Breast epithelium (tissue), 4 donors: ENCODE measurements at regions of chr9 and their contacts with region 1.

Region 1: DNA sequence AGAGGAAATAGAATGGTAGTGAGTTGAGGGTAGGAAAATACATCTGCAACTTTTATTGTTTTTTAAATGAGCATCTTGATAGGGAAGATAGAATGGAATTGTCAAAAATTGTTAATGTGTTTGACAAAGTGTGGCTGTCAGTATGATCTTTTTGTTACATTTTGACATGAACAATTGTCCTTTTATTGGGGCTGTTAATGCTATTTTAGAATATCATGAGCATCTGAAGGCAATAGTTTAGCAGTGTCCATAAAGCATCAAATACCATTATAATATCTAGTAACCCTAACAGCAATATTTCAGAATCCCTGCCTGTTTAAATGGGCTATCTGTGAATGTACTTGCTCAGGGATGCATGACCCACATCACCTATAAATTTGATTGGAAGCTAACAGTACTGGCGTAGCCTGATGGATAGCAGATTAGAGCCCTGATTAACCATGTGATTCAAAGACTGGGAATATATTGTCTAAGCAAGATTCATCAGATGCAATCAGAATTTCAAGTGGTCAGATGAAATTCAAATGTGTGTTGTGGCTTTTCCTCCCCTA is 37.8 kb downstream of the TLE4 start:
- DNase-seq: no peak
- H3K4me3 ChIP-seq: no peak overlapping the region
- H3K27ac ChIP-seq: no peak overlapping the region
- H3K4me1 ChIP-seq: no peaks in the 10 kb centered on the region
- H3K27me3 ChIP-seq: no peaks in the 10 kb centered on the region
- CTCF ChIP-seq: no peak
- POLR2A ChIP-seq: no peak

Region 2: GRCh38 chr9:79623799-79624721 is 14.5 kb after region 1 on chr9:
- intact Hi-C with region 1: loop called (anchors 2 kb)
- DNase-seq: no peak
- H3K4me3 ChIP-seq: no peak overlapping the region
- H3K27ac ChIP-seq: no peak overlapping the region
- H3K4me1 ChIP-seq: no peaks in the 10 kb centered on the region
- H3K27me3 ChIP-seq: no peaks in the 10 kb centered on the region
- CTCF ChIP-seq: no peak
- POLR2A ChIP-seq: no peak